Mammary epithelial cell (primary cell): ENCODE measurements at regions of chr11 and their contacts with region 1.

Region 1: DNA sequence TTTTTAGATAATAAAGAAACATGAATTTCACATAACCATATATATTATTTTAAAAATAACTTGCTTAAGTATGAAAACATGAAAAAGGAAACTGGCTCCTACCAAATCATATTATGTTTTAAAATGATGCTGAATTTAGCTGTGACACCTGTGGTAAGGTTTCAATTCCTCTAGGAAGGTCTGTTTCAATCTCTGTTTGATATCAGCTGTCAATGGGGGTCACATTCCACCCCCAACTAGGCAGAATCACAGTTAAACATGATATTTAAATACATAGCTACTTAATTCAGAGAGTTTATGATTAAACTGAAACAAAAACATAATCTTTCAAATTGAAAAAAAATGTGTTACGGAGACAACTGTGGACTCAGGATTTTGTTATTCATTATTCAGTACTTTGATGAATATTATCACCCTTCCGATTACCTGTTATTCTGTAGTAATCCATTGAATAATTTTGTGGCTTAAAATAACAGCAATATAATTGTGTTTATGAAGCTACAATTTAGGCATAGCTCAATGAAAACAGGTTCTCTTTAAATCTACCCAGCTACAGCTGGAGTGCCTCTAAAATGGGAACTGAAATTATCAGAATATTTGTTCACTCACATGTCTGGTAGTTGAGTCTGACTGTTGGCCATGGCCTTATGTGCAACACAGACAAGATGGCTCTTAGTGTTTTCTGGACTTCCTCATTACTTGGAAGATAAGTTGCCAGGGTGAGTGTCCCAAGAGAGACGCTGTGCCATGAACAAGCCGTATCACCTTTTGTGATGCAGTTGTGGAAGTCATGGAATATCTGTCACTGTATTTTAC is 244.6 kb upstream of the ANO3 start:
- DNase-seq: no peak
- H3K4me3 ChIP-seq: no peak overlapping the region
- H3K27ac ChIP-seq: no peak overlapping the region
- H3K4me1 ChIP-seq: no peaks in the 10 kb centered on the region
- H3K27me3 ChIP-seq: no peaks in the 10 kb centered on the region
- CTCF ChIP-seq: no peak

Region 2: GRCh38 chr11:26187639-26188038 is 100.3 kb after region 1 on chr11:
- CTCF ChIA-PET with region 1: no interaction called
- dilution Hi-C with region 1: no loop called
- in situ Hi-C with region 1: no loop called
- intact Hi-C with region 1: loop called (anchors 10 kb)
- DNase-seq: peak; percentile 73
- H3K4me3 ChIP-seq: no peak overlapping the region
- H3K27ac ChIP-seq: peak overlapping the region; percentile 40
- H3K4me1 ChIP-seq: peaks cover 9% of the 10 kb centered on the region
- H3K27me3 ChIP-seq: no peaks in the 10 kb centered on the region
- CTCF ChIP-seq: no peak